GM23248 (cell line): ENCODE measurements at regions of chr21 and their contacts with region 1.

Region 1: DNA sequence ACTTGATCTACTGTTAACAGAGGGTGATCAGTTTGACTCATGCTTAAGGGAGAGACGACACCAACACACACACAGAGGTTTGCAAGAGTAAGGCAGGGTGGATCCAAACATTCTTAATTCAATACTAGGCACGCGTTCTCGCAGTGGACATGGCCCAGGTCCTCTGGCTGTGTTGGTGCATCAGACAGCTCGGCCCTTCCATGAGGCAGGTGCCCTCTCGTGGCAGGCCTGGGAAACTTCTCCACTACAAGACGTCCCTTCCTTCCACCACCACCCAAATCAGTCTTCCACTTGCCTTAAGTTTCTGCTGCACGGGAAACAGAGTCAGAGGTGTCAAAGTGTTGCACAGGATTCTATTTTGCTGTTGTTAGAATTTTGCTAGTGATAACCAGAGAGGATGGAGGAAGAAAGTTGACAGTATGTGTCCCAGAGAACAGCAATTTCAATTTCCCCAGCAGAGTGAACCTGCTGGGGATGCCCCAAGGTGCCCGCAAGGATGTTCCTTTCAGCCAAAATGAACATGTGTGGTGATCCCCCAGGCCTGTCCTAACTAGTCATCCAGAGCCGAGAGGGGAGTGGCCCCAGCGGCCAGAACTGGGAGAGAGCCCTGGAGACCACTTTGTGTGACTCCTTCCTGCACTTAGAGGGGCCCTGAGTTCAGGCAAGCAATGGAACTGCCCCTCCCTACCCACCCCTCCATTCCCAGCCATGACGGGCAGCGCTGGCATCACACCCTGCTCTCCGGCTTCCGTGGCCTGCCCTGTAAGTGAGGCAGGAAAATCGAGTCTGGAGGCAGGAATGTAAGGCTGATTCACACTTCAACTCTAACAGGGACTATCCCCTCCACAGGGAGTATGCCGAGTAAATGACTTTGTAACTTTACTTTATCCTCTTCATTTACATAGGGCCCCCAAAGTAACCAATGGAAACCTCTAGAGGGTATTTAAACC is 34.8 kb downstream of the MX1 start:
- DNase-seq: peak; percentile 89
- H3K4me3 ChIP-seq: no peak overlapping the region
- H3K27ac ChIP-seq: no peak overlapping the region
- H3K4me1 ChIP-seq: no peaks in the 10 kb centered on the region
- H3K27me3 ChIP-seq: no peaks in the 10 kb centered on the region

Region 2: DNA sequence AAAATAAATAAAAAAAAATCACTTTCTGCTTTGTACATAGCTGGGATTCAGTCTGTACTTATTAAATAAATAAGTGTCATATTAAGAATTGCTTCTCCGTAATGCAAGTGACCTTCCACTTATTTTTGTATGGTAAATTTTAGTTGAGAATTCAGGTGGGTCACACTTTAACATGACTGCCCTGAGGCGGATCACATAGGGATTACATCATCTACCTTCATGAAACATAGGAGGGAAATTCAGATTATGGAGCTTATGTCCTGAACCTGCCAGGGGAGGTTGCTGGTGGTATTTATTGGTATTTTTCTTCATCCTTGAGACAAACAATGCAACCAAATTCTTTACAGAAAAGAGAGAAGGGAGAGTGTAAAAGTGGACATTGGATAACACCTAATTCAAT is 678.1 kb before region 1 on chr21:
- in situ Hi-C with region 1: no loop called
- DNase-seq: no peak
- H3K4me3 ChIP-seq: no peak overlapping the region
- H3K27ac ChIP-seq: no peak overlapping the region
- H3K4me1 ChIP-seq: no peaks in the 10 kb centered on the region
- H3K27me3 ChIP-seq: no peaks in the 10 kb centered on the region

Region 3: GRCh38 chr21:41250194-41250918 is 210.5 kb before region 1 on chr21:
- in situ Hi-C with region 1: no loop called
- DNase-seq: peak; percentile 81
- H3K4me3 ChIP-seq: no peak overlapping the region
- H3K27ac ChIP-seq: peak overlapping the region; percentile 37; the same call in 1 of the 2 replicates
- H3K4me1 ChIP-seq: peaks cover 45% of the 10 kb centered on the region
- H3K27me3 ChIP-seq: no peaks in the 10 kb centered on the region

Region 4: DNA sequence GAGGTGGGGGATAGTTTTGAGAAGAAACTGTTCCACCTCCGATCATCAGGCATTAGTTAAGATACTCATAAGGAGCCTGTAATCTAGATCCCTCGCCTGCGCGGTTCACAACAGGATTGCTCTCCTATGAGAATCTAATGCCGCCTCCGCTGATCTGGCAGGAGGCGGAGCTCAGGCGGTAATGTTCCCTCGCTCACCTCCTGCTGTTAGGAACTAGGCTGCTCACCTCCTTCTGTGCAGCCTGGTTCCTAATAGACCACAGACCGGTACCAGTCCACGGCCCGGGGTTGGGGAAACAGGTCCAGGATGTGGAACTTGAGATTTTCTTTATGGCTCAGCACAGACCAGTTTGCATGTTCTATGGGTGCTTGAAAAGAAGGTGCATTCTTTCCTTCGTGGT is 171.4 kb before region 1 on chr21:
- in situ Hi-C with region 1: loop called (anchors 5 kb)
- DNase-seq: no peak
- H3K4me3 ChIP-seq: no peak overlapping the region
- H3K27ac ChIP-seq: no peak overlapping the region
- H3K4me1 ChIP-seq: no peaks in the 10 kb centered on the region
- H3K27me3 ChIP-seq: peaks cover 25% of the 10 kb centered on the region

Region 5: GRCh38 chr21:41777951-41778874 is 317.4 kb after region 1 on chr21:
- in situ Hi-C with region 1: no loop called
- DNase-seq: peak; percentile 97
- H3K4me3 ChIP-seq: peak overlapping the region; percentile 47
- H3K27ac ChIP-seq: peak overlapping the region; percentile 57
- H3K4me1 ChIP-seq: peaks cover 7% of the 10 kb centered on the region; the same call in 1 of the 2 replicates
- H3K27me3 ChIP-seq: no peaks in the 10 kb centered on the region

Region 6: DNA sequence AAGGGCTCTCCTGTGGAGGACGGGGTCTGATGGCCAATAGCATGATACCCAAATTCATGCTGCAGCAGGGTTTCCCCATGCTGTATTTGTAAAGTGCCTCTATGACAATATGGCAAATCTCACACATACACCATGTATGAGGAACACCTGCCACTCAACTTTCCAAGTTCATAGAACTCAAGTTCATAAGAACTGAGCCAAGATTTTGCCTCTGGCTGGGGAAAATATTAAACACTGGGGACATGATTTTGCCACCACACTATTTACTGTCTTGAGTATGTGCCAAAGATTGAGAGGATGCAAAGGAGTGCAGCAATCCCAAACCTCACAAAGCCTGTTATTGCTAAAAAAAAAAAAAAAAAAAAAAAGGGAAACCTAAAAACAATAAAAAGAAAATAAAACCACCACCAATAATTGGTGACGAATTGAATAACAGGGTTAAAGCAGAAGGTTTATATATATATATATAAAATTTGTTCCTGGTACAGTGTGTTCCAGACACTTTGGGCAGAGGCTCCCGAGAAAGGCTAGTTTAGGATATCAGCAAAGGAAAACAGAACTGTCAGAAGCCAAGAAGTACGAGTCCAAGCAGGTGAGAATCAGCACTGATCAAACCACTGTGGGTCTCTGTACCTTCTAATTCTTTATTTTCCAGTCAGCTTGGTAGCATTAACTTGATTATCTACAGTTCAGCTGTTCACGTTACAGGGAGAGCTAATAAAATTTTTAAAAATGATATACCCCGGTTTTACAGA is 525.0 kb after region 1 on chr21:
- in situ Hi-C with region 1: no loop called
- DNase-seq: no peak
- H3K4me3 ChIP-seq: no peak overlapping the region
- H3K27ac ChIP-seq: no peak overlapping the region
- H3K4me1 ChIP-seq: no peaks in the 10 kb centered on the region
- H3K27me3 ChIP-seq: no peaks in the 10 kb centered on the region